ENCODE measurements at regions of chr19 and their contacts with region 1.

Region 1: DNA sequence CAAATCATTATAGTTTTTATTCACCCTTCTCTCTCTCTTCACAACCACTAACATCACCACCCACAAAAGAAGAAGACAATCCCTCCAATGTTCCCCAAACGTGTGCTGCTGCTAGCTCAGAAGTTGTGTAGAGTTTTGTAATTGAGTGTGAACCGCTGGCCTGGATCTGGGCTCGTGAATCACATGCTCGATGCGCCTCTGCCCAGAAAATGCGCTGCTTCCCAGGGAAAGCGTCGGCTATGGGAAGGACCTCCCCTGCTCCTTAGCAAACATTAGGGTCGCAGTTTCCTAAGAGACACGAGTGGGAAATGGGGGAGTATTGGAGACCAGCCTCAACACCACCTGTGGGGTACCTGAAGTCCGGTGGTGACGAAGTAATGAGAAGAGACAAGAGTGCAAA is 38.4 kb upstream of the ZNF726 start:
- DNase-seq: no peak
- H3K4me3 ChIP-seq: no peak overlapping the region
- H3K27ac ChIP-seq: no peak overlapping the region
- H3K4me1 ChIP-seq: no peaks in the 10 kb centered on the region
- H3K27me3 ChIP-seq: peaks cover 0 to 10% (median 0%) of the 10 kb centered on the region in 7 donors
- CTCF ChIP-seq: no peak
- POLR2A ChIP-seq: no peak

Region 2: DNA sequence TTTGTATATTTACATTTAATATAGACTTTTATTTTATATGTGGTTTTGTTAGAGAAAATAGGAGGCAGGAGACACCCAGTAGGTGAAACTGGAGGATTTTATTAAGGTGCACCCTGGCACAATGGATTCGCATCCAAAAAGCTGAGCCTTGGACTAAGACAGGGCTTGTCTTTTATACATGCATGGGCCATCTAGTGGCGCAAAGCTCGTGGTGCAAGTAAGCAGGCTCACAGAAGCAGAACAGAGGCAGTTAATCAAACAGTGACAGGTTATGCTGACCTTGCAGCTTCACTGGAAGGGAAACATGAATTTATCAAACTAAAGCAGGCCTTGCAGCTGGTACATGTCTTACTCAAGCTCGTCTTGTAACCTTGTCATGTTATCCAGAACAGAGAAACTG is 58.7 kb before region 1 on chr19:
- intact Hi-C with region 1: no loop called
- DNase-seq: no peak
- H3K4me3 ChIP-seq: no peak overlapping the region
- H3K27ac ChIP-seq: no peak overlapping the region
- H3K4me1 ChIP-seq: no peaks in the 10 kb centered on the region
- H3K27me3 ChIP-seq: no peaks in the 10 kb centered on the region
- CTCF ChIP-seq: peak in 8 of 11 experiments; percentile 12 to 60 (median 41)
- POLR2A ChIP-seq: no peak

Region 3: DNA sequence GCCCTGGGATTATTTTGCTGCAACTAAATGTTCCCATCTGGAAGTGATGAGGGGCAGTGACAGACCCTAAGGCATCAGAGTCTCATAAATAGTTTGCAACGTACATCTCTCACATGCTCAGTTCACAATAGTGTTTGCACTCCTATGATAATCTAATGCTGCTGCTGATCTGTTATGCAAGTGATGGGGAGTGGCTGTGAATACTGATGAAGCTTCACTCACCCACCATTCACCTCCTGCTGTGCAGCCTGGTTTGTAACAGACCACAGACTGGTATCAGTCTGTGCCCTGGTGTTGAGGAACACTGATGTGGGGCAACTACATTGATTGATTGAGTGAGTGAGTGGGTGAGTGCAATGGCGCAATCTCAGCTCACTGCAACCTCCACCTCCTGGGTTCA is 93.4 kb after region 1 on chr19:
- intact Hi-C with region 1: loop called (anchors 2 kb)
- DNase-seq: no peak
- H3K4me3 ChIP-seq: no peak overlapping the region
- H3K27ac ChIP-seq: no peak overlapping the region
- H3K4me1 ChIP-seq: no peaks in the 10 kb centered on the region
- H3K27me3 ChIP-seq: peaks cover 3 to 44% (median 17%) of the 10 kb centered on the region in 7 donors
- CTCF ChIP-seq: no peak
- POLR2A ChIP-seq: no peak